ENCODE measurements at regions of chr15 and their contacts with region 1.

Region 1: DNA sequence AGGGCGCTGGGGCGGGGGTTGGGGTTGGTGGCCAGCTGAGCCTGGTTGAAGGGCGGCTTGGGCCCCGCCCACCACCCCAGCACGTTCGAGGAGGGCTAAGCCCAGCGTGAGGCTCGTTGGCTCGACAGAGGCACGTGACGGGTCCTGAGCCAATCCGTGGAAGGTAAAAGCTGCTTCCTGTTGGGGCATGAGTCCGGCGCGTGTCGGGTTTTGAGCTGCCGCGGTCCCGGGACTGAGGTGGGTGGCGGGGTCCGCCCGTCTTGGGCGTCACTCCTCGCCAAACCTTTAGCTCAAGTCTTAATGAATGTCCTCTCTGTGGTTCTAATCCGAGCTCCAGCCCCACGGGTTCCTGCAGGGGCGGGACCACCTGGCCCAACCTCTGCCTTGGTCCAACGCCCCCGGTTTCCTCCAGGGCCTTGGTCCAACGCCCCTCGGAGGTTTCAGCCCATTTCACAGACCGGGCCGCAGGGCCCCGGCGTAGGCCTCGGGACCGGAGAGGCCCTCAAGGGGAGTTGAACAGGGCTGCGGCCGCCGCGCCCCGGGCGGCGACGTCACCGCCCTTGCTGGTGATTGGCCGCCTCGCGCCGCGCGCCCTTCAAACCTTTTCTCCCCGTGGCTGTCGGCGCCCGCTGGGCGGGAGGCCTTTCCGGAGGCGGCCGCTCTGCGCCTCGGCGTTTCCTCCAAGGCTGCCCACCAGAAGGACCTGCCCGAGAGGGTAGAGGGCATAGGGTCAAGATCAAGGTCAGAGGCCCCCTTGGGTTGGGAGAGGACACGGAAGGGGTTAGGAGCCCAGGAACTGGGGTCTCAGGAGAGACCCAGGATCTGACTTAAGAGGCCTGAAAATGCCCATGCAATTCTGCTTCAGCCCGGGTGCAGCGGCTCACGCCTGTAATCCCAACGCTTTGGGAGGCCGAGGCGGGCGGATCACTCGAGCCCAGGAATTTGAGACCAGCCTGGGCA is at the start of gene RCCD1:
- DNase-seq: peak; percentile 84
- H3K4me3 ChIP-seq: peak within 1 kb of the TSS; percentile 84
- H3K27ac ChIP-seq: peak within 1 kb of the TSS; percentile 86
- H3K27me3 ChIP-seq: no peaks in the 10 kb centered on the region
- CTCF ChIP-seq: no peak
- polyA plus RNA-seq, gene RCCD1: 5.6 and 6.1 TPM in 2 replicates

Region 2: GRCh38 chr15:90845201-90845949 is 109.6 kb before region 1 on chr15:
- CTCF ChIA-PET with region 1: no interaction called
- POLR2A ChIA-PET with region 1: no interaction called
- DNase-seq: peak; percentile 82
- H3K4me3 ChIP-seq: no peak overlapping the region
- H3K27ac ChIP-seq: peak overlapping the region; percentile 87
- H3K27me3 ChIP-seq: peaks cover 3% of the 10 kb centered on the region
- CTCF ChIP-seq: no peak

Region 3: GRCh38 chr15:90931737-90932659 is 23.0 kb before region 1 on chr15 and contains the start of gene HDDC3:
- CTCF ChIA-PET with region 1: interaction called, 64 read pairs
- POLR2A ChIA-PET with region 1: interaction called, 19 read pairs
- DNase-seq: peak; percentile 58
- H3K4me3 ChIP-seq: peak within 1 kb of the TSS; percentile 91
- H3K27ac ChIP-seq: peak within 1 kb of the TSS; percentile 11
- H3K27me3 ChIP-seq: no peaks in the 10 kb centered on the region
- CTCF ChIP-seq: peak; percentile 90
- polyA plus RNA-seq, gene HDDC3: 10.0 and 10.3 TPM in 2 replicates

Region 4: GRCh38 chr15:90970274-90970673 is 15.3 kb after region 1 on chr15:
- CTCF ChIA-PET with region 1: interaction called, 27 read pairs
- POLR2A ChIA-PET with region 1: no interaction called
- DNase-seq: no peak
- H3K4me3 ChIP-seq: no peak overlapping the region
- H3K27ac ChIP-seq: no peak overlapping the region
- H3K27me3 ChIP-seq: no peaks in the 10 kb centered on the region
- CTCF ChIP-seq: no peak

Region 5: DNA sequence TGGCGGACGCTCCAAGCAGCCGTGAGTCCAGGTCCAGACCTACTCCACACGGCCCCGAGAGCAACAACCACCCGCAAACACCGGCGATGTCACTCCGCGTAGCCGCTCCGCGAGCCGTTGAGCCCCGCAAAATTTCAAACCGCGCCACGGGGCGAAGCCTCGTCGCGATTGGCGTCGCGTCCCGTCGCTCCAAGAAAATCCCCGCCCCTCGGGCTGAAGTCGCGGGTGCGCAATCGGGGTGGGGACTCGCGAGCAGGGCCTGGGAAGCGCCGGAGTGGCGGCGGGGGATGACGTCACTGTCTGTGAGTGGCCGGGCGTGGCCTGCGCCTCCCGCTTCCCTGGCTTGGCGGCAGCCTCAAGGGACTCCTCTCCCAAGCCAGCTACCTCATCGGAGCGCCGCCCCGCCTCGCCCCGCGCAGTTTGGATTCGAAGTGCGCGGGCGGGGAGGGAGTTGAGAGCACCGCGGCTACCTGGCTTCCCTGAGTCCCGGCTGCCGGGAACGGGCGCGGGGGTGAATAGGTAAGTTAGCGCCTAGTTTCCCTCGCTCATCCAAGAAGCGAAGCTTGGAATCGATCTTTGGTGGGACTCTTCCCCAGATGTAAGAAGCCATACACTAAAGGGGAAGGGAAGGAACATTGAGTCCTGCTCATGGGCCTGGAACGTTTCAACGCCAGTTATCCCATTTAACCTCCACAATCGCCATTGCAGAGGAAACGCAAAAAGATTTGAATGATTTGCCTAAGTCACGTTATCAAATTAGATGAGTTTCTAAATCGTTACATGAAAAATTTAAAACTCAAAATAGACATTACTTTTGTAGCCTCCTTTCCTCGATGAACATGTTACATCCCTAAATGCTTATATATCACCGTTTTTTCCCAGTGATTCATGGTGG is 39.7 kb after region 1 on chr15 and contains the start of gene PRC1:
- CTCF ChIA-PET with region 1: interaction called, 70 read pairs
- POLR2A ChIA-PET with region 1: no interaction called
- DNase-seq: peak; percentile 93
- H3K4me3 ChIP-seq: peak within 1 kb of the TSS; percentile 99
- H3K27ac ChIP-seq: peak within 1 kb of the TSS; percentile 87
- H3K27me3 ChIP-seq: no peaks in the 10 kb centered on the region
- CTCF ChIP-seq: no peak
- polyA plus RNA-seq, gene PRC1: 61.0 and 77.5 TPM in 2 replicates

Region 6: GRCh38 chr15:91049378-91050127 is 94.6 kb after region 1 on chr15:
- CTCF ChIA-PET with region 1: interaction called, 157 read pairs
- POLR2A ChIA-PET with region 1: interaction called, 3 read pairs
- DNase-seq: peak; percentile 38
- H3K4me3 ChIP-seq: no peak overlapping the region
- H3K27ac ChIP-seq: no peak overlapping the region
- H3K27me3 ChIP-seq: peaks cover 8% of the 10 kb centered on the region
- CTCF ChIP-seq: peak; percentile 84

Region 7: DNA sequence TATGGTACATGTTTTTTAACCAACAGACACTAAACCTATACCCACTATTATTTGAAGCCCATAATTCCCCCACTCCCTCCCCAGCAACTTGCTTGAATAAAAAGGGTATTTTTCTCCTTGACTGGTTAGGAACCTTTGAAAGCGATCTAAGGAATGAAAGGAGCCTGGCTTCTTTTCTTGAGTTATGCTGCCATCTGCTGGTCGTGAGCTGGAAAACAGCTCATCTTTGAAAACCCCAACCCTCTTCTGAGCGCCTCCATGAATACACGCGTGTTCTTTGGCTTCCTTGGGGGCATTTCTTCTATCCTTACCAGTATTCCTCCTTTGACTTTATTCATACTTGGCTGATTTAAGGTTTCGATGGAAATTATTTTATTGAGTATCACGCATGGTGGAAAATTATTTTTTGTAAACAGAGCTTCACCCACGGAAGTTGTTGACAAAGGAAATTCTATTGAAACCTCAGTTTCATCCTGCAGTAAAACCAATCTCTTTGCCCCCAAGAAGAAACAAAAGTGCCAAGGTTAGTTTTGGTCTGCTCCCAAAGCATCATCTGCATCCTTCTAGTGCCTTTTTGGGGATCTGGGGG is 316.7 kb after region 1 on chr15:
- CTCF ChIA-PET with region 1: interaction called, 92 read pairs
- POLR2A ChIA-PET with region 1: interaction called, 6 read pairs
- DNase-seq: peak; percentile 29
- H3K4me3 ChIP-seq: no peak overlapping the region
- H3K27ac ChIP-seq: no peak overlapping the region
- H3K27me3 ChIP-seq: no peaks in the 10 kb centered on the region
- CTCF ChIP-seq: peak; percentile 78

Region 8: GRCh38 chr15:92149029-92149428 is 1194.0 kb after region 1 on chr15:
- CTCF ChIA-PET with region 1: no interaction called
- POLR2A ChIA-PET with region 1: no interaction called
- DNase-seq: no peak
- H3K4me3 ChIP-seq: no peak overlapping the region
- H3K27ac ChIP-seq: no peak overlapping the region
- H3K27me3 ChIP-seq: no peaks in the 10 kb centered on the region
- CTCF ChIP-seq: no peak

Measured in AG04450 (cell line).